Dendritic cell treated with granulocyte-macrophage colony-stimulating factor and Interleukin-4, amounts not matched to agents 40 ng/mL and 50 ng/mL, for 4 days (primary cell): ENCODE measurements at regions of chr11 and their contacts with region 1.

Region 1: DNA sequence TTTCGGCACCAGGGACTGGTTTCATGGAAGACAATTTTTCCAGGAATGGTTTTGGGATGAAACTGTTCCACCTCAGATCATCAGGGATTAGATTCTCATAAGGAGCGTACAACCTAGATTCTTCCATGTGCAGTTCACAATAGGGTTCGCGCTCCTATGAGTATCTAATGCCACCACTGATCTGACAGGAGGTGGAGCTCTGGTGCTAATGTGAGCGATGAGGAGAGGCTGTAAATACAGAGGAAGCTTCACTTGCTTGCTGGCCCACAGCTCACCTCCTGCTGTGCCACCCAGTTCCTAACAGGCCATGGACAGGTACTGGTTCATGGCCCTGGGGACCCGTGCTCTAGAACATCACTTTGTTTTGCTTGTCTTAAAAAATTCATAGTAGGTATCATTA is 41.8 kb upstream of the AMPD3 start:
- H3K4me3 Mint-ChIP-seq: no peak overlapping the region
- H3K27ac Mint-ChIP-seq: peak overlapping the region; percentile 78
- H3K4me1 Mint-ChIP-seq: peaks cover 63% of the 10 kb centered on the region
- H3K27me3 Mint-ChIP-seq: peaks cover 2% of the 10 kb centered on the region

Region 2: GRCh38 chr11:10436224-10436623 is 23.0 kb after region 1 on chr11:
- intact Hi-C with region 1: loop called (anchors 1 kb)
- H3K4me3 Mint-ChIP-seq: no peak overlapping the region
- H3K27ac Mint-ChIP-seq: peak overlapping the region; percentile 88
- H3K4me1 Mint-ChIP-seq: peaks cover 24% of the 10 kb centered on the region
- H3K27me3 Mint-ChIP-seq: no peaks in the 10 kb centered on the region

Region 3: DNA sequence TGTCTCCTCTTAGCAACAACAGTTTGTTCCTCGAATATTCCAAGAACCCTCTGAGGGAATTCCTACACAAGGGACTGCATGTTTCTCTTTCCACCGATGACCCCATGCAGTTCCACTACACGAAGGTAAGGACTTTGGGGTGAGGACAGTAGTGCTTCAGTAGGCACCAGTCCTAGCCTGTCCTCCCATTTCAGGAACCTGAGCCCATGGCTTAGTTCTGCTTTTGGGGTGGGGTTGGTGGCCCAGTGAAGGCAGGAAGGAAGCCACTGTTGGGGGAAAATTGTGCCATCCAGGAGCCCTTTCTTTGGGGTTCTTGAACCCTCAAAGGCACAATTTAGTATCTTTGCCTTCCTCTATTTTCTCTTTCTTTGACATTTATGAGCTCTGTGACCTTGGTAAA is 89.5 kb after region 1 on chr11:
- intact Hi-C with region 1: loop called (anchors 5 kb)
- H3K4me3 Mint-ChIP-seq: peak overlapping the region; percentile 32
- H3K27ac Mint-ChIP-seq: peak overlapping the region; percentile 82
- H3K4me1 Mint-ChIP-seq: peaks cover 49% of the 10 kb centered on the region
- H3K27me3 Mint-ChIP-seq: no peaks in the 10 kb centered on the region